ENCODE measurements at regions of chr17 and their contacts with region 1.

Region 1: GRCh38 chr17:7740481-7741001 is 23.0 kb downstream of the DNAH2 start:
- DNase-seq: no peak
- H3K4me3 ChIP-seq: no peak overlapping the region
- H3K27ac ChIP-seq: no peak overlapping the region
- H3K4me1 ChIP-seq: no peaks in the 10 kb centered on the region
- CTCF ChIP-seq: no peak

Region 2: DNA sequence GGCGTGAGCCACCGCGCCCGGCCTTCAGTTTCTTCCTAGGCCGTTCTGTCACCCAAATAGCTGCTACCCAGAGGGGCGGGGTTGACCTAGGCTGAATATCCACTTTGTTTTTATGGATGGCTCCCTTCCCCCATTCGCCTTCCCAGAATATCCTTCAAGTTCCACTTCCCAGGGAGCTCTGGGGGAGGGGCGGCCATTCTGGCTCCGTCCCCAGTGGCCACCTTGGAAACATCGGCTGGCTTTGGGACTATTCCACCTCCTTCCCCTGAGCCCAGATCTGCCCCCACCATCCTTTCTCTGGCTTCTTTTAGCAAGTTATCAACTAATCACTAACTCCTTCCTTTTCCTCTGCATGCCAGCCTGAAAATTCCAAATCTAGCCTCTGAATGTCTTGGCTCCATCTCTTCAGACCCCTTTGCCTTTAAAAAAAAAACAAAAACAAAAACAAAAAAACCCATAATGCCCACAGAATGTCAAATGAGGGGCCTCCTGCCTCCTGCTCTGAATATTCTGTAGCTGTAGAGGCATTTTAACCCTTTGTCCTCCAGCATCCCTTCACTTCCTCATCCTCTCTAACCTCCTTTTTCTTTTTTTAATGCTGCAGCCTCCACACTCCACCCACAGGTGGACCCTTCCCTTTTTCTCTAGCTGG is 83.5 kb before region 1 on chr17:
- CTCF ChIA-PET with region 1: no interaction called
- POLR2A ChIA-PET with region 1: no interaction called
- intact Hi-C with region 1: no loop called
- DNase-seq: no peak
- H3K4me3 ChIP-seq: no peak overlapping the region
- H3K27ac ChIP-seq: no peak overlapping the region
- H3K4me1 ChIP-seq: no peaks in the 10 kb centered on the region
- CTCF ChIP-seq: no peak

Region 3: GRCh38 chr17:7851438-7852256 is 111.1 kb after region 1 on chr17:
- CTCF ChIA-PET with region 1: no interaction called
- POLR2A ChIA-PET with region 1: no interaction called
- intact Hi-C with region 1: loop called (anchors 1 kb)
- DNase-seq: peak; percentile 95
- H3K4me3 ChIP-seq: peak overlapping the region; percentile 67
- H3K27ac ChIP-seq: peak overlapping the region; percentile 42
- H3K4me1 ChIP-seq: peaks cover 31% of the 10 kb centered on the region
- CTCF ChIP-seq: peak; percentile 88

Region 4: DNA sequence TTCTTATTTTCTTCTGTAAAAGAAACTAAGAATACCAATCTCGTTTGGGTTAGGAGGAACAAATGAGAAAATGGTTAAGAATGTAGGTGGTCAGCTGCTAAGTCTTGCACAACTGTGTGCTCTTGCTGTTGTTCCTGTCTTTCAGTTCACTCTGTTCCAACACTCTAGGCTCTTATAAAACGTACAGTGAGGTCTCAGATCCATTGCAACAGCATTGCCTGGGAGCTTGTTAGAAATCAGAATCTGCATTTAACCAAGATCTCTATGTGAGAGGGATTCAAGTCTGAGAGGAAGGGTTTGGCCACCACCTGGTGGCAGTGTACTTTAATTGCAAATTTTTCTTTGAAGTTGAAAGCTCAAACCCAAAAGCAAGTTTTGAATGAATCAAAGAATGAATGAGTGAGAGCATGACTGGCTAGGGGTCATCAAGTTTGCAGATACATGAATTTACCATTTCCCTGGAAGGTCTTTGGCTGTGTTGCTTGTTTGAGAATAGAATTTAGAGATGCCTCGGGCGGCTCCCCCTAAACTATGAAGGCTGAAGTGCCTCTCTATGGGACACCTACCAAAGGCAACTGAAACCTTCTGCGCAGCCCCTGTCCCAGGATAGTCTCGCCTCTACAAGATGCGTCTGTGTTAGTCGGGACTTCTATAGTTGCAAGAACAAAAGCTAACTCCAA is 300.8 kb after region 1 on chr17:
- CTCF ChIA-PET with region 1: no interaction called
- POLR2A ChIA-PET with region 1: no interaction called
- intact Hi-C with region 1: loop called (anchors 5 kb)
- DNase-seq: peak; percentile 76
- H3K4me3 ChIP-seq: no peak overlapping the region
- H3K27ac ChIP-seq: no peak overlapping the region
- H3K4me1 ChIP-seq: no peaks in the 10 kb centered on the region
- CTCF ChIP-seq: peak; percentile 92